ENCODE measurements at regions of chr19 and their contacts with region 1.

Region 1: DNA sequence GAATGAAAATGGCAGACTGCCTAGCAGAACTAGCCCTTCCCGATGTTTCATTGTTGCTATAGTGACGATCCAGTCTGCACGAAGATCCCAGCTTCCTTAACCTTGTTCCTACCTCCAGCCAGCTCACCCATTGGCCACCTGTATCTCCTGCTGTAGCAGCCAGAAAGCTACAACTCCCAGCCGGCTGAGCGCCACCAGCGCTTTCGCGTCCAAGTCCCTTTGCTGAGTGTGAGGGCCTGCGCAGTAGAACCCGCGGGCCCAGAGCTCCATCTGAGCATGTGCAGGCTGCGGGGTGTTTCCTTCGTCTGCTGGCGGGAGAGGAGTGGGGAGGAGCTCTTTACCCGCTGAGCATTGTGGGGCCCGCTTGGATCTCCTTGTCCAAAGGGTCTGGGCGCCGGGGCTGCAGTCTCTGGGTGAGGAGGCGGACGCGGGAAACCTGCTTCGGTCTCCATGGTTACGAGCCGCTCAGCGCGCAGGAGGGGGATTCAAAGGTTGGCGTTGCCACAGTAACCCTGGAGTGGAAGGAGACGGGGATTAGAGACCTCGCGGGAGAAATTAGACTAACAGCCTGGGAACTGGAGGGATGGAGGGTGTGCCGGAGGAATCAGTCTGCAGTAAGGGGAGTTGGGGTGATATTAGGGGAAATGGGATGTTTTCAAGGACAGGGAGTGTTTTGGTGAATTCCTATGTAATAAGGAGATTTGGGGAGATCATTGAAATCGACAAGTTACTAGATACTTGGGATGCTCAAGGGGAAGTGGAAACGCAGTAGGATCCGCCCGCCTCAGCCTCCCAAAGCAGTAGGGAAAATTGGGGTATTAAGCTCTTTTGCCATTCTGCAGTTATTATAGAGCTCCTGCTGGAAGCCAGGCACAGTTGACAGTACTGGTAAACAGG is 33.5 kb downstream of the ZSWIM9 start:
- DNase-seq: peak; percentile 93 to 97 (median 97)
- H3K4me3 ChIP-seq: peak overlapping the region; percentile 57 to 93 (median 78)
- H3K27ac ChIP-seq: peak overlapping the region; percentile 46 to 77
- H3K4me1 ChIP-seq: peaks cover 13 to 30% (median 20%) of the 10 kb centered on the region in 4 experiments
- H3K27me3 ChIP-seq: no peaks in the 10 kb centered on the region

Region 2: GRCh38 chr19:48190288-48190884 is 13.6 kb before region 1 on chr19:
- CTCF ChIA-PET with region 1: interaction called, 12 read pairs
- POLR2A ChIA-PET with region 1: no interaction called
- DNase-seq: peak in 2 of 3 donors; percentile 44 to 81
- H3K4me3 ChIP-seq: no peak overlapping the region
- H3K27ac ChIP-seq: no peak overlapping the region
- H3K4me1 ChIP-seq: no peaks in the 10 kb centered on the region
- H3K27me3 ChIP-seq: no peaks in the 10 kb centered on the region

Region 3: DNA sequence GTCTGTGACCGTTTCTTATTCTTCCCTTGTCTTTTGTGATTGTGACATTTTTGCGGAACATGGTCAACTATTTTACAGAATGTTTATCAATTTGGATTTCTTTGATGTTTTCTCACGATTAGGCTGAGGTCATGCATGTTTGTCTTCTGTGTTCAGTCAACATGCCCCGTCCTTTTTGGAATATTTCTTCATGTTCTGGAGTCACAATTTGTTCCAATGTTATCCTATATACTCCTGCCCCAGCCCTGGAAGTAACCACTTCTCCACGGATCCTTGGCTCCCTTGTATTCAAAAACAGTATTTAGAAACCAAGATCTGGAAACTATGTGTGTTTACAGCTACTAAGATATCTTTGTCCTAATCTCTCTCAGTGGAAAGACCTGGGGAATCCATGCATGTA is 42.1 kb after region 1 on chr19:
- CTCF ChIA-PET with region 1: no interaction called
- POLR2A ChIA-PET with region 1: no interaction called
- DNase-seq: no peak
- H3K4me3 ChIP-seq: peak overlapping the region in 1 of 7 experiments; percentile 3
- H3K27ac ChIP-seq: no peak overlapping the region
- H3K4me1 ChIP-seq: peaks cover 33 to 58% (median 40%) of the 10 kb centered on the region in 4 experiments
- H3K27me3 ChIP-seq: no peaks in the 10 kb centered on the region

Measured in common myeloid progenitor, CD34-positive (primary cell).